Body of pancreas (tissue), 4 donors: ENCODE measurements at regions of chr5 and their contacts with region 1.

Region 1: GRCh38 chr5:140151730-140152597 is 23.0 kb upstream of the CYSTM1 start:
- DNase-seq: no peak
- ATAC-seq: no peak
- H3K4me3 ChIP-seq: no peak overlapping the region
- H3K27ac ChIP-seq: no peak overlapping the region
- H3K4me1 ChIP-seq: peaks cover 8% of the 10 kb centered on the region
- H3K27me3 ChIP-seq: no peaks in the 10 kb centered on the region
- CTCF ChIP-seq: no peak
- POLR2A ChIP-seq: no peak

Region 2: DNA sequence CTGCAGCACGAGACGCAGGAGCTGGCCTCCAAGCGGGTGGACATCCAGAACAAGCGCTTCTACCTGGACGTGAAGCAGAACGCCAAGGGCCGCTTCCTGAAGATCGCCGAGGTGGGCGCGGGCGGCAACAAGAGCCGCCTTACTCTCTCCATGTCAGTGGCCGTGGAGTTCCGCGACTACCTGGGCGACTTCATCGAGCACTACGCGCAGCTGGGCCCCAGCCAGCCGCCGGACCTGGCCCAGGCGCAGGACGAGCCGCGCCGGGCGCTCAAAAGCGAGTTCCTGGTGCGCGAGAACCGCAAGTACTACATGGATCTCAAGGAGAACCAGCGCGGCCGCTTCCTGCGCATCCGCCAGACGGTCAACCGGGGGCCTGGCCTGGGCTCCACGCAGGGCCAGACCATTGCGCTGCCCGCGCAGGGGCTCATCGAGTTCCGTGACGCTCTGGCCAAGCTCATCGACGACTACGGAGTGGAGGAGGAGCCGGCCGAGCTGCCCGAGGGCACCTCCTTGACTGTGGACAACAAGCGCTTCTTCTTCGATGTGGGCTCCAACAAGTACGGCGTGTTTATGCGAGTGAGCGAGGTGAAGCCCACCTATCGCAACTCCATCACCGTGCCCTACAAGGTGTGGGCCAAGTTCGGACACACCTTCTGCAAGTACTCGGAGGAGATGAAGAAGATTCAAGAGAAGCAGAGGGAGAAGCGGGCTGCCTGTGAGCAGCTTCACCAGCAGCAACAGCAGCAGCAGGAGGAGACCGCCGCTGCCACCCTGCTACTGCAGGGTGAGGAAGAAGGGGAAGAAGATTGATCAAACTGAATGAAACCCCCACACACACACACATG is 37.4 kb before region 1 on chr5:
- intact Hi-C with region 1: loop called (anchors 5 kb)
- DNase-seq: peak; percentile 65 to 78 (median 70)
- ATAC-seq: peak; percentile 67
- H3K4me3 ChIP-seq: peak overlapping the region; percentile 43 to 56
- H3K27ac ChIP-seq: peak overlapping the region; percentile 88 to 94 (median 90)
- H3K4me1 ChIP-seq: peaks cover 66% of the 10 kb centered on the region
- H3K27me3 ChIP-seq: no peaks in the 10 kb centered on the region
- CTCF ChIP-seq: no peak
- POLR2A ChIP-seq: peak; percentile 10 to 55 (median 42)